ENCODE measurements at regions of chr2 and their contacts with region 1.

Region 1: GRCh38 chr2:71798266-71799012 is 345.1 kb downstream of the DYSF start:
- DNase-seq: peak; percentile 39
- H3K4me3 ChIP-seq: no peak overlapping the region
- H3K27ac ChIP-seq: no peak overlapping the region
- H3K4me1 ChIP-seq: no peaks in the 10 kb centered on the region
- H3K27me3 ChIP-seq: peaks cover 4 to 6% of the 10 kb centered on the region in 2 experiments
- CTCF ChIP-seq: peak; percentile 78 to 88
- POLR2A ChIP-seq: no peak

Region 2: DNA sequence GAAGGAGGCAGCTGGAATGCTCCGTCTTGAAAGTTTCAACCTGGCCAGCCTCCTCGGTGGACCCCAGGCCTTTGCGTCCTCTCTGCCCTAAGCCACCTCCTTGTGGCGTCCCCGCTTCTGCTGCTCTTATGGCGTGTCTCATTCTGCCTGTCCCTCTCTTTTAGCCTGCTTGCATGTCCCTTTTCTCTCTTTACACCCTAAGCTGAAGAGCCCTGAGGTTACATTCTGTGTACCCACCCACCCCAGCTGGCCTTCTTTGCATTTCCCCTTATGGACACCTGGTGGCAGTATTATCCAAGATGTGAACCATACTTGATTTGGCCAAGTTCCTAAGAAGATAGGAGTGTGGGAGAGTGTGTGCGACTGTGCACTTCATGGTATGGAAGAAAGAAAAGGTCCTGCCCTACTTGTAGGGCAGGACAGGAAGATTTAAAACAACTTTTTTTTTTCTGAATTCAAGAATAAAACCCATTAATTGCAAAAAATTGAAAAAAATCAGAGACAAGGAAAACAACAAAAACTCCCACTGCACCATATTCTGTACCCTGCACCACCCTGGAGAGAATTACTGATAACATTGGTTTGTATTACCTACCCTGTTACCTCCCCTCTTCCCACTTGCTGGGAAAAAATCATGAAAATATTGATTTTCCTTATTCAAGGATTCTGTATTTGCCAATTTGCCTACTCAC is 267.7 kb before region 1 on chr2:
- CTCF ChIA-PET with region 1: interaction called, 11 read pairs
- POLR2A ChIA-PET with region 1: no interaction called
- dilution Hi-C with region 1: no loop called
- intact Hi-C with region 1: loop called (anchors 5 kb)
- DNase-seq: peak; percentile 64
- H3K4me3 ChIP-seq: no peak overlapping the region
- H3K27ac ChIP-seq: peak overlapping the region; percentile 40
- H3K4me1 ChIP-seq: peaks cover 7% of the 10 kb centered on the region
- H3K27me3 ChIP-seq: no peaks in the 10 kb centered on the region
- CTCF ChIP-seq: peak; percentile 64 to 67
- POLR2A ChIP-seq: no peak

Region 3: DNA sequence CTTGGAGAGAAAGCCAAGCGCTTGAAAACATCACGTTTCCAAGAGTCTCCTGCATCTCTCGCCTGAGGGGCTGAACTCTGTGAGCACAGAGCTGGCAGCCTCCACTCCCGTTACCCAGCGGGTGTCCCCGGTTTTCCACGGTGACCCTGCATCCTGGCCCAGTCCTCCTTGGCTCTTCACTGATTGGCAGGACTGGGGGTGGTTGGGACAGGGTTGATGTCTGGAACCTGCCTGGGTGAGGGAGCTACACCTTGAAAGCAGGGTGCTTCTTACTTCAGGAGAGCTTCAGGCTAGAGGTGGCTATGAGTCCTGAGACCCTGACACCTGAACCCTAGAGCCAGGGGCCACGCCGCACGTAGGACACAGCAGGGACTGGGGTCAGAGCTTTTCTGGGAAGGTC is 111.0 kb before region 1 on chr2:
- CTCF ChIA-PET with region 1: interaction called, 10 read pairs
- POLR2A ChIA-PET with region 1: no interaction called
- dilution Hi-C with region 1: no loop called
- intact Hi-C with region 1: no loop called
- DNase-seq: no peak
- H3K4me3 ChIP-seq: no peak overlapping the region
- H3K27ac ChIP-seq: no peak overlapping the region
- H3K4me1 ChIP-seq: no peaks in the 10 kb centered on the region
- H3K27me3 ChIP-seq: no peaks in the 10 kb centered on the region
- CTCF ChIP-seq: no peak
- POLR2A ChIP-seq: no peak

Region 4: DNA sequence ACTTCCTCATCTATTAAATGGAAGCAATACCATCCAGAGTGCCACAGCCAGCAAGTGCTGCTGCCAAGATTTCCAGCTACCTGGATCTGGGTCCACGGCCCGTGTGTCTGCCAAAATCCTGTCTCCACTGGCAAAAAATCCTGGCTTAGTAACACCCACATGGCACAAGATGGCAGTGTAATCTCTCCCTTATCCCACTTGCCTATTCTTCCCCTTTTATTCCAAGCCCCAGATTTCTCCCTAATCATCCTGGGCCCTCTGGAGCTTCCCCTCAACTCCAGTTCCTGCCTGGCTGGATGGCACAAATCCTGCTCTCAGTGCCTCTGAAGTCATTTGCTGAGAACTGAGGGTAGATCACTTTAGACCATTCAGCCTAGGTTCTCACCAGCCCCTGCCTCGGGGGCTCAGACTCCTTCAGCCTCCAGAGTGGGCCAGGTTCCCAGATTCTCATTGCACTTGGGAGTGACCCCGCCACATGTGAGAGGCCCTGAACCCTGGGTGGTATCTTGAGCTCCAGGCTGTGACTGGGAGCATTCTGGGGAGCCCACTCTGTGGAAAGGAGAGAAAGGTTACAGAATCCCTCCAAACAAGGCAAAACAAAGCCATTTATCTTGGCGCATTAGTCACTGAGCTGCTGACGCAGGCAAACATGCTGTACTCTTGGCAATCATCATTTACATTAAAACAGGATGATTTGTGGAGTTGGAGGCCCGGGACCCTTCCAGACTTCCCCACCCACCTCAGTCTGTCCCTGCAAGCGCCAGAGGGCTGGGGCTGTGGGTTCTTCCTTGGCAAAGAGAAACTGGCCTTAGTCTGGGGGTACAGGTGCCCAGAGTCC is 19.3 kb before region 1 on chr2:
- CTCF ChIA-PET with region 1: interaction called, 33 read pairs
- POLR2A ChIA-PET with region 1: no interaction called
- dilution Hi-C with region 1: no loop called
- intact Hi-C with region 1: no loop called
- DNase-seq: no peak
- H3K4me3 ChIP-seq: no peak overlapping the region
- H3K27ac ChIP-seq: no peak overlapping the region
- H3K4me1 ChIP-seq: no peaks in the 10 kb centered on the region
- H3K27me3 ChIP-seq: peaks cover 10 to 16% of the 10 kb centered on the region in 2 experiments
- CTCF ChIP-seq: no peak
- POLR2A ChIP-seq: no peak

Region 5: DNA sequence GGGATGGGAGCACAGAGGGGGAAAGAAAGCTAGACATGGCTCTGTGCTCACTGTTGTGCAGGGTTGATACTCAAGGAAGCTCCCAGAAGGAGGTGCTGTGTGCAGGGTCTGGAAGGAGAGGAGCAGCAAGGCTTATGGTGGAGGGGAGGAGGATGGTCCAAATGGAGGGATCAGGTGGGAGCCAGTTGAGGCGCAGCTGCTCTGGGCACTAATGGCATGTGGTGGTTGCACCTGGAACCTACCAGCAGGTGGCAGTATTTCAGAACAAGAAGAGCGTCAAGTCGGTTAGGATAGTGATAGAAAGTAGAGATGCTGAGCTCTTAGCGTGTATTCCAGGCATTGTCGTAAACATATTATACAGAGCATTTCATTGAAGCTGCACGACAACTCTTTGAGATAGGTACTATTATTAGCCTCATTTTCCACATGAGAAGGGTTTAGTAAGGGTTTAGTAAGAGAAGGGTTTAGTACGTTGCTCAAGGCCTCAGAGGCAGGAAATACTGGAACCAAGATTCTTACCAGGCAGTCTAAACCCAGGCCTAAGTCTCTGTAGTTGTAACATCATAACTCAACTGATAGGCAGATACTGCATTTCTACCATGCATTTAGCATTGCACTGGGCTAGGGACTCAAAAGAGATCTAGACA is 125.6 kb after region 1 on chr2:
- CTCF ChIA-PET with region 1: interaction called, 15 read pairs
- POLR2A ChIA-PET with region 1: no interaction called
- dilution Hi-C with region 1: no loop called
- intact Hi-C with region 1: no loop called
- DNase-seq: peak; percentile 66
- H3K4me3 ChIP-seq: no peak overlapping the region
- H3K27ac ChIP-seq: no peak overlapping the region
- H3K4me1 ChIP-seq: no peaks in the 10 kb centered on the region
- H3K27me3 ChIP-seq: no peaks in the 10 kb centered on the region
- CTCF ChIP-seq: peak; percentile 78 to 81
- POLR2A ChIP-seq: no peak

Region 6: DNA sequence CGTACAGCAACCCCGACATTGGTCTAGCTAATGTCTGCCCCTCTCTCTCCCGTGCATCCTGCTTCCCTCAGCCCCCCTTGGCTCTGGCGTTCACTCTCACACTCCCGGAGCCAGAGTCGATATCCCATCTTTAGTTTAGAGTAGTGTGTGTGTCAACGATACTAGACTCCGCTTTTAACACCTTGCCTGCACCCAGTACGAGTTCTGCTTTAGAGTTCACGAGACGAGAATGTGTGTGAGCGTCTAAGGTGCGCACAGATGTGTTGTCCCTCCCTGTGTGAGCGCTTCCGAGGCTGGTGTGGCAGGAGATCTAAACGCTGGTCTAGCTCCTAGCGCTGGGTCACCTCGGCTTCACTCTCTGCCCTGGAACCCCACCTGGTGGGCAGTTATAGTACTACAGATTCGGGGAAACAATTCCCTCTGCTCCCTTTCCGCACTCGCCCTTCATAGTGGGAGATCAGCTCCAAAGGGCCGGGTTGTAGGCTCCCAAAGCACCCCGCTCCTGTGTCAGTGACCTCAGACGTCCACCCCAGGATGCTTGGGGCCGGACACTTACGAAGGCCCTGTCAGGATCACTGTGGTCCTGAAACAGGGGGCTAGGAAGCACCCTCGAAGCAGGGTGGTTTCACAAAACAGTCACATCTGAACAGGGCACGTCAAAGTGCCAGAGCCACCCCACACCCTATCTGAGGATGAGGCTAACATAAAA is 351.9 kb after region 1 on chr2:
- CTCF ChIA-PET with region 1: interaction called, 70 read pairs
- POLR2A ChIA-PET with region 1: no interaction called
- dilution Hi-C with region 1: no loop called
- intact Hi-C with region 1: loop called (anchors 1 kb)
- DNase-seq: peak; percentile 77
- H3K4me3 ChIP-seq: no peak overlapping the region
- H3K27ac ChIP-seq: no peak overlapping the region
- H3K4me1 ChIP-seq: peaks cover 15% of the 10 kb centered on the region
- H3K27me3 ChIP-seq: peaks cover 33 to 48% of the 10 kb centered on the region in 2 experiments
- CTCF ChIP-seq: peak; percentile 66 to 85
- POLR2A ChIP-seq: no peak

Measured in endothelial cell of umbilical vein (primary cell).